B cell (primary cell): ENCODE measurements at regions of chr3 and their contacts with region 1.

Region 1: DNA sequence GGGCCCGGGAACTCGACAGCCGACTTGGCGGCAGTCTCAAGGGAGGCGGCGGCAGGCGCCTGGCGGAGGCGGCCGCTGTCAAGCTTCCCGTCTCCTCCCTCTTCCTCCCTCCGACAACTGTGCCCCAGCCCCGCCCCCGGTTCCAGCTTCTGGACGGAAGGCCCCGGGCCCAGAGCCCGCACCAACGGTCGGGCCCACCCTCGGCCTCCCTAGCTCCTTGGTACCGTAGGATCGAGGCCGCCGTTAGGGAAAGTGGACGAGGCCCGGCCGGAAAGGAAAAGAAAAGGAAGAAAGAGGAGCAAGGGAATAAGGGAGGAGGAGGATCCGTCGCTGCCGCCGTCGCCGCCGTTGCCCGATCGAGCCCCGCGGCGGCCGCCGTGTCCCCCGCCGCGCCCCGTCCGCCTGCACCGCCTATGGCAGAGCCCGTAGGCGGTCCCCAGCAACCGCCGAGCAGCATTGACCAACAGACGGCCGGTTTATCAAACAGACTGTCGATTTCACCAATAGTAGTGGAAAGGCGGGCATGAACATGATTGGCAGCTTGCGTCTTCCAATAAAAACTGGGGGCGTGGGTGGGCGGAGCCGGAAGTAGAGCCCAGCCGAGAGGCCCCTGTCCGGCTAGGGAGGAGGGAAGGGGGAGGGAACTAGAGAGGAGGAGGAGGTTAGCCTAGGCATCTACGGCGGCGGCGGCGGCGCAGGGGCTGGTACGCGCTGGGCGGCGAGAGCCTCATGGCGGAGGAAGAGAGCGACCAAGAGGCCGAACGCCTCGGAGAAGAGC is at the starts of genes CGGBP1 and ZNF654:
- DNase-seq: peak; percentile 99
- ATAC-seq: peak; percentile 89
- H3K4me3 ChIP-seq: peak within 1 kb of the TSS; percentile 79 to 96 (median 87)
- H3K4me3 Mint-ChIP-seq: peak within 1 kb of the TSS; percentile 98
- H3K27ac ChIP-seq: peak within 1 kb of the TSS; percentile 86 to 89
- H3K27ac Mint-ChIP-seq: peak within 1 kb of the TSS; percentile 93
- H3K4me1 ChIP-seq: peaks cover 14 to 27% of the 10 kb centered on the region in 2 donors
- H3K4me1 Mint-ChIP-seq: peaks cover 53% of the 10 kb centered on the region
- H3K27me3 ChIP-seq: no peaks in the 10 kb centered on the region
- H3K27me3 Mint-ChIP-seq: no peaks in the 10 kb centered on the region
- CTCF ChIP-seq: no peak
- total RNA-seq, gene CGGBP1: 119 and 121 TPM in 2 replicates
- total RNA-seq, gene ZNF654: 19.5 and 22.1 TPM in 2 replicates

Region 2: GRCh38 chr3:87227104-87227834 is 831.5 kb before region 1 on chr3 and contains the start of gene CHMP2B:
- CTCF ChIA-PET with region 1: no interaction called
- POLR2A ChIA-PET with region 1: no interaction called
- intact Hi-C with region 1: loop called (anchors 1 kb)
- DNase-seq: peak; percentile 96
- ATAC-seq: peak; percentile 87
- H3K4me3 ChIP-seq: peak within 1 kb of the TSS; percentile 42 to 99 (median 96)
- H3K4me3 Mint-ChIP-seq: peak within 1 kb of the TSS; percentile 97
- H3K27ac ChIP-seq: peak within 1 kb of the TSS; percentile 89 to 98
- H3K27ac Mint-ChIP-seq: peak within 1 kb of the TSS; percentile 97
- H3K4me1 ChIP-seq: peaks cover 13 to 16% of the 10 kb centered on the region in 2 donors
- H3K4me1 Mint-ChIP-seq: peaks cover 53% of the 10 kb centered on the region
- H3K27me3 ChIP-seq: peaks cover 0 to 7% (median 3%) of the 10 kb centered on the region in 4 experiments
- H3K27me3 Mint-ChIP-seq: peaks cover 14% of the 10 kb centered on the region
- CTCF ChIP-seq: no peak
- total RNA-seq, gene CHMP2B: 22.2 and 25.0 TPM in 2 replicates

Region 3: GRCh38 chr3:88031642-88032077 is 27.1 kb before region 1 on chr3:
- CTCF ChIA-PET with region 1: interaction called, 7 read pairs
- POLR2A ChIA-PET with region 1: interaction called, 6 read pairs
- intact Hi-C with region 1: loop called (anchors 1 kb)
- DNase-seq: peak; percentile 67
- ATAC-seq: peak; percentile 83
- H3K4me3 ChIP-seq: peak overlapping the region; percentile 21 to 71 (median 46)
- H3K4me3 Mint-ChIP-seq: peak overlapping the region; percentile 90
- H3K27ac ChIP-seq: peak overlapping the region; percentile 40 to 52
- H3K27ac Mint-ChIP-seq: peak overlapping the region; percentile 82
- H3K4me1 ChIP-seq: peaks cover 15 to 25% of the 10 kb centered on the region in 2 donors
- H3K4me1 Mint-ChIP-seq: peaks cover 36% of the 10 kb centered on the region
- H3K27me3 ChIP-seq: no peaks in the 10 kb centered on the region
- H3K27me3 Mint-ChIP-seq: no peaks in the 10 kb centered on the region
- CTCF ChIP-seq: no peak

Region 4: GRCh38 chr3:88149509-88150362 is 91.0 kb after region 1 on chr3 and contains the start of gene C3orf38:
- CTCF ChIA-PET with region 1: interaction called, 7 read pairs
- POLR2A ChIA-PET with region 1: interaction called, 25 read pairs
- intact Hi-C with region 1: loop called (anchors 1 kb)
- DNase-seq: peak; percentile 90
- ATAC-seq: peak; percentile 88
- H3K4me3 ChIP-seq: peak within 1 kb of the TSS; percentile 88 to 100 (median 95)
- H3K4me3 Mint-ChIP-seq: peak within 1 kb of the TSS; percentile 99
- H3K27ac ChIP-seq: peak within 1 kb of the TSS; percentile 93 to 98
- H3K27ac Mint-ChIP-seq: peak within 1 kb of the TSS; percentile 99
- H3K4me1 ChIP-seq: peaks cover 25 to 33% of the 10 kb centered on the region in 2 donors
- H3K4me1 Mint-ChIP-seq: peaks cover 35% of the 10 kb centered on the region
- H3K27me3 ChIP-seq: no peaks in the 10 kb centered on the region
- H3K27me3 Mint-ChIP-seq: no peaks in the 10 kb centered on the region
- CTCF ChIP-seq: no peak
- total RNA-seq, gene C3orf38: 42.5 and 50.0 TPM in 2 replicates